Right ventricle myocardium superior (tissue), 1 donor: ENCODE measurements at regions of chr6 and their contacts with region 1.

Region 1: GRCh38 chr6:56708810-56709597 is 66.3 kb upstream of the DST start:
- DNase-seq: no peak
- ATAC-seq: peak; percentile 32

Region 2: GRCh38 chr6:56463443-56463842 is 245.6 kb before region 1 on chr6:
- intact Hi-C with region 1: no loop called
- DNase-seq: no peak
- ATAC-seq: no peak

Region 3: DNA sequence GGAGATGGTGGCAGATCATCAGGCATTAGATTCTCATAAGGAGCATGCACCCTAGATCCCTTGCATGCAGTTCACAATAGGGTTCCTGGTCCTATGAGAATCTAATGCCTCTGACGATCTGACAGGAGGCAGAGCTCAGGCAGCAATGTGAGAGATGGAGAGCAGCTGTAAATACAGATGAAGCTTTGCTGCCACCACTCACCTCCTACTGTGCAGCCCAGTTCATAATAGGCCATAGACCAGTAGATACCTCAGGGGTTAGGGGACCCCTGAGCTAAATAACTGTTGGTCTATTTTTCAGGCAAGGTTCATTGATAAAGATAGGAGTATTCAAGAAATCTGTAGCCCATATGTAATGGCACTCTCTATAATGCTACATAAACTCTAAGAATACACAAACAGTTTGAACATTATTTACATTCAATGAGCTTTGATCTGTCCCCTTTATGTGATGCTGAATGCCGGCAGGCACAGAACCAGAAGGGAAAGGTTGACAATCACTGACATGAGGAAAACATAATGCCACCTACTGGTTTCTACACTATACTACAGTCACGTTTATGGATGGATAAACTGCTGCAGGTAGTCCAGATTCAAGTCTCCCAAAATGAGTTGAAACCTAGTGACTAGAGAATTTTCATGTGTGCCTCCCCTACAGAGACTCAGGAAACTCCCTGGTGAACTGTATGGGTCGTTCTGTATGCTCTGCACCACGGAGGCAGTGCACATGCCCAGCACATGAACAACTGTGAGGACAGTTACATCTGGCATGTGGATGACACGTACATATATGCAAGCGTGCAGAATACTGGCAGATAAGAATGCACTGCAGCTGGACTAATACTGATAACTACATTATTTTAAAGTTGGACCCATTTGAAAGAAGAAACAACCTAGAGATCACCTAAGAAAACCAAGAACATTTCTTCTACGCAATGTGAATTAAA is 138.3 kb before region 1 on chr6:
- intact Hi-C with region 1: no loop called
- DNase-seq: no peak
- ATAC-seq: peak; percentile 69

Region 4: DNA sequence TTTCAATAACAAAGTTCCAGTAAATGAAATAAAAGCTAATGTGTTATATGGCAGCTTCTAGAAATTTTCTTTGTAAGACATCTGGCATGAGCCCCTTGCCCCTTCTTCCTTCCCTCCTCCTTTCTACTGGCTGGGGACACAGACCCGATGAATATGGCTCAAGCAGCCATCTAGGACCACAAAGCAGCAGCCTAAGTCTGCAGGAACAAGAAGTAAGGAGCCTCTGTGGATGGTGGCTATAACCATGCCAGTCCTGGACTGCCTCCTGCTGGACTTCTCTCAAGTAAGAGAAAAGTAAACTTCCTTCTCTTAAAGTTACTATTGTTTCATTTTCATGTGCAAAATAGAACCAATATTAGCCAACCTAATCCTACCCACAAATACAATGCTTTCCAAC is 48.6 kb after region 1 on chr6:
- intact Hi-C with region 1: loop called (anchors 5 kb)
- DNase-seq: no peak
- ATAC-seq: peak; percentile 35

Region 5: GRCh38 chr6:56851541-56852259 is 142.7 kb after region 1 on chr6:
- intact Hi-C with region 1: loop called (anchors 5 kb)
- DNase-seq: peak; percentile 44
- ATAC-seq: peak; percentile 91